ENCODE measurements at regions of chr11 and their contacts with region 1.

Region 1: GRCh38 chr11:2532704-2533586 is 88.1 kb downstream of the KCNQ1 start:
- DNase-seq: peak; percentile 71
- H3K4me3 ChIP-seq: no peak overlapping the region
- H3K27ac ChIP-seq: no peak overlapping the region
- H3K4me1 ChIP-seq: peaks cover 29% of the 10 kb centered on the region
- H3K27me3 ChIP-seq: no peaks in the 10 kb centered on the region
- CTCF ChIP-seq: peak; percentile 86 to 98

Region 2: GRCh38 chr11:2196970-2197770 is 335.8 kb before region 1 on chr11:
- CTCF ChIA-PET with region 1: no interaction called
- dilution Hi-C with region 1: no loop called
- in situ Hi-C with region 1: no loop called
- intact Hi-C with region 1: loop called (anchors 10 kb)
- DNase-seq: peak; percentile 36
- H3K4me3 ChIP-seq: no peak overlapping the region
- H3K27ac ChIP-seq: no peak overlapping the region
- H3K4me1 ChIP-seq: peaks cover 3% of the 10 kb centered on the region
- H3K27me3 ChIP-seq: no peaks in the 10 kb centered on the region
- CTCF ChIP-seq: peak; percentile 92 to 98

Region 3: DNA sequence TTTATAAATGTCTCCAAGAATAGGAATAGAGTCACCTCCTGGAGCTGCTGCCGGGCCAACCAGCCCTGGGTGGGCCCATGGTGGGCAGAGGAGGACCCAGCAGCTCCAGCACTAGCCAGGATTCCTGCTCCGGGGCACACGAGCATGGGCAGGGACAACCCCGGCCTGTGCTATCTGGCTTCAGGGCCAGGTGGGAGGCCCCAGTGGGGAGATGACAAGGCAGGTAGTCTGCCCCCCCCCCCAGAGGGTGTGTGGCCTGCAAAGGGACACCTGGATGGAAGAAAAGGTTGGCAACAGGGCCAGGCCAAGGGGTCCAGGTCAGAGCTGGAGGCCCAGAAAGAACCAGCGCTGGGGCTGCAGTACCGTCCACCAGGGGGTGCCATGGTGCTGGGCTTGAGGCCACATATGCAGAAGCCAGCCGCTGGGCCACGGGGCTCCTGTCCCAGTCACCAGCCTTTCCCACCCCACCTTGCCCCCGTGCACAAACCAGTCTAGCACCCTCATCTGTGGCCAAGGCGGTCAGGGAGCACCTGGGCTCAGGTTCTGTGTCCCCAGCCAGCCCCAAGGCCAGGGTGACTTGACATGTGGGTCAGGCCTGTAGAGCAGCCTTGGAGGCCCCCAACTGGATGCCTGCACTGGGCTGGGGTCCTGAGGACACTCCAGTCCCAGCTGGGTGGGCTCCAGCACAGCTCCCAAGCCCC is 227.7 kb before region 1 on chr11:
- CTCF ChIA-PET with region 1: interaction called, 4 read pairs
- dilution Hi-C with region 1: no loop called
- in situ Hi-C with region 1: no loop called
- intact Hi-C with region 1: loop called (anchors 2 kb)
- DNase-seq: peak; percentile 36
- H3K4me3 ChIP-seq: no peak overlapping the region
- H3K27ac ChIP-seq: no peak overlapping the region
- H3K4me1 ChIP-seq: no peaks in the 10 kb centered on the region
- H3K27me3 ChIP-seq: no peaks in the 10 kb centered on the region
- CTCF ChIP-seq: peak; percentile 66 to 91

Region 4: GRCh38 chr11:2428322-2428795 is 104.6 kb before region 1 on chr11:
- CTCF ChIA-PET with region 1: no interaction called
- dilution Hi-C with region 1: no loop called
- in situ Hi-C with region 1: loop called (anchors 5 kb)
- intact Hi-C with region 1: loop called (anchors 1 kb)
- DNase-seq: peak; percentile 19
- H3K4me3 ChIP-seq: no peak overlapping the region
- H3K27ac ChIP-seq: no peak overlapping the region
- H3K4me1 ChIP-seq: no peaks in the 10 kb centered on the region
- H3K27me3 ChIP-seq: no peaks in the 10 kb centered on the region
- CTCF ChIP-seq: peak; percentile 71 to 99

Region 5: DNA sequence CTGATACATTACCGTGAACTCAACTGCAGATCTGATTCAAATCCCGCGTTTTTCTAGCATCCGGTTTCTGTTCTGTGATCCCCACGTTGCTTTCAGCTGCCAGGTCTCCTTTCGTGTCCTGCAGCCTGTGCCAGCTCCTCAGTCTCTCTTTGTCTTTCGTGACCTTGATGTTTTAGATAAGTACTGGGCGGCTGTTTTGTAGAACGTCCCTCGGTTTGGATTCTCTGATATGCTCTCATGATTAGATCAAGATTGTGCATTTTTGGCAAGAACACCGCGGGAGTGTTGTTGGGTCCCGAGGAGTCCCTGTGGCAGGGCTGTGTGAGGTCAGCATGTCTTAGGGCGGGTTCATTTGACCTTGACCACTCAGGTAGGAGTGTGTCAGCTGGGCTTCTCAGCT is 49.5 kb before region 1 on chr11:
- CTCF ChIA-PET with region 1: no interaction called
- dilution Hi-C with region 1: no loop called
- in situ Hi-C with region 1: no loop called
- intact Hi-C with region 1: no loop called
- DNase-seq: no peak
- H3K4me3 ChIP-seq: no peak overlapping the region
- H3K27ac ChIP-seq: no peak overlapping the region
- H3K4me1 ChIP-seq: no peaks in the 10 kb centered on the region
- H3K27me3 ChIP-seq: no peaks in the 10 kb centered on the region
- CTCF ChIP-seq: no peak

Region 6: GRCh38 chr11:2885676-2886081 is 352.7 kb after region 1 on chr11 and contains the start of gene CDKN1C:
- CTCF ChIA-PET with region 1: interaction called, 5 read pairs
- dilution Hi-C with region 1: loop called (anchors 25 kb)
- in situ Hi-C with region 1: loop called (anchors 5 kb)
- intact Hi-C with region 1: loop called (anchors 1 kb)
- DNase-seq: peak; percentile 65
- H3K4me3 ChIP-seq: peak within 1 kb of the TSS; percentile 35 to 63 (median 54)
- H3K27ac ChIP-seq: no peak within 1 kb of the TSS
- H3K4me1 ChIP-seq: peaks cover 17% of the 10 kb centered on the region
- H3K27me3 ChIP-seq: peaks cover 19% of the 10 kb centered on the region
- CTCF ChIP-seq: no peak
- total RNA-seq, gene CDKN1C: 0.38 to 0.50 TPM

Region 7: DNA sequence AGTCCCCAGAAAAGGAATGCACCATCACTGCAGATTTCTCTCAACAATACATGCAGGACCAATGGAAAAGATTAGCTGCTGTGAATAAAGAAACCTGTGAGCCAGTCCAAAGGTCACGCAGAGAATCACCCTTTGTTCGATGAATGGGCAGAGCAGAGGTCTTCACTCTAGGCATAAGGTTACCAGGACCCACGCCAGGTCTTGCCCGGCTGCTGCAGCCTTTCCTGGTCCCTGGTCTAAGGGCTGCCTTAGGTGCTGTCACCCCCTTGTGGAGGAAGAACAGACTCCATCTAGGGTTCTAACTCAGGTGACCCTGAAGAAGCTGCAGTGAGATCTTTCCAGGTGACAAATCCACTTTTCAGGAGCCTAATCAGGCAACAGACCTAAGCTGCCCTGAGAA is 488.2 kb after region 1 on chr11:
- CTCF ChIA-PET with region 1: no interaction called
- dilution Hi-C with region 1: no loop called
- in situ Hi-C with region 1: no loop called
- intact Hi-C with region 1: loop called (anchors 2 kb)
- DNase-seq: peak; percentile 54
- H3K4me3 ChIP-seq: no peak overlapping the region
- H3K27ac ChIP-seq: no peak overlapping the region
- H3K4me1 ChIP-seq: peaks cover 20% of the 10 kb centered on the region
- H3K27me3 ChIP-seq: no peaks in the 10 kb centered on the region
- CTCF ChIP-seq: peak; percentile 70 to 87

Region 8: DNA sequence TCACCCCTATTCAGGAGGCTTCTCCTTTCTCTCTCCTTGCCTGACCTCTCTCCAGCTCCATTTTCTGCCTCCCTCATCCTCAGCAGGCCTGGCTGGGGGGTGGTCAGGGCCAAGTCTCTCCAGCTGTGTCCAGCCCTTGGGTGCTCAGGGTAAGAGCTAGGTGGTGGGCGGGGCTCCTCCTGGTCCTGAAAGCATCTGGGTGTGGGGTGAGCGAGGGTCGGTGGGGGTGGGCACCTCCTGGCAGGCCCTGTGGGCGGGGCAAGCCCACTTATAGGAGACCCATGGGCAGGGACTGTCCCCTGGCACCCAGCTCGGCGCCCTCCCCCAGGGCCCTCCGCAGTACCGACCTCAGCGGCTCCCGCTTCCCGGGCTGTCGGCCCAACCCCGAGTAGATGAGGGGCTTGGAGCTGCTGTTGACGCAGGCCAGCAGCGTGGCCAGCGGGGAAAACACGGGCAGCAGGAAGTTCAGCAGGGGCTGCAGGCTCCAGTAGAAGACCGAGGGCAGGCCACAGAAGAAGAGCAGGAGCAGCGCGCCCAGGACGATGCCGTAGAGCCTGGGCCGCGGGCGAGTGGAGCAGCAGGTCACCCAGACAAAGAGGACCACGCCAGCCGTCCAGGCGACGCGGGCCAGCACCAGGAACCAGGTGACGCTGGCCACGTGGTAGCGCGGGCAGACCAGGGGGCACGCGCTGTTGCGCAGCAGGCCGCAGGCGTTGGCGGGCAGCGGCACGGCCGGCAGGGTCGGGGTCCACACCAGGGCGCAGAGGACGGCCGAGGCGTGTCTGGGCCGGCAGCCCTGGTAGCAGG is 684.9 kb after region 1 on chr11:
- CTCF ChIA-PET with region 1: no interaction called
- dilution Hi-C with region 1: no loop called
- in situ Hi-C with region 1: no loop called
- intact Hi-C with region 1: loop called (anchors 2 kb)
- DNase-seq: no peak
- H3K4me3 ChIP-seq: no peak overlapping the region
- H3K27ac ChIP-seq: no peak overlapping the region
- H3K4me1 ChIP-seq: no peaks in the 10 kb centered on the region
- H3K27me3 ChIP-seq: peaks cover 3% of the 10 kb centered on the region
- CTCF ChIP-seq: no peak

Measured in mammary epithelial cell (primary cell).